Transverse colon (tissue), 4 donors: ENCODE measurements at regions of chr2 and their contacts with region 1.

Region 1: GRCh38 chr2:72150157-72150865 is 2.6 kb upstream of the CYP26B1 start:
- DNase-seq: peak; percentile 86
- H3K4me3 ChIP-seq: peak overlapping the region in 2 of 4 donors; percentile 43 to 62
- H3K27ac ChIP-seq: no peak overlapping the region
- H3K4me1 ChIP-seq: peaks cover 31 to 46% (median 37%) of the 10 kb centered on the region in 4 donors
- H3K27me3 ChIP-seq: peaks cover 54% of the 10 kb centered on the region
- CTCF ChIP-seq: peak; percentile 79 to 94 (median 89)
- EP300 ChIP-seq: no peak
- POLR2A ChIP-seq: no peak

Region 2: DNA sequence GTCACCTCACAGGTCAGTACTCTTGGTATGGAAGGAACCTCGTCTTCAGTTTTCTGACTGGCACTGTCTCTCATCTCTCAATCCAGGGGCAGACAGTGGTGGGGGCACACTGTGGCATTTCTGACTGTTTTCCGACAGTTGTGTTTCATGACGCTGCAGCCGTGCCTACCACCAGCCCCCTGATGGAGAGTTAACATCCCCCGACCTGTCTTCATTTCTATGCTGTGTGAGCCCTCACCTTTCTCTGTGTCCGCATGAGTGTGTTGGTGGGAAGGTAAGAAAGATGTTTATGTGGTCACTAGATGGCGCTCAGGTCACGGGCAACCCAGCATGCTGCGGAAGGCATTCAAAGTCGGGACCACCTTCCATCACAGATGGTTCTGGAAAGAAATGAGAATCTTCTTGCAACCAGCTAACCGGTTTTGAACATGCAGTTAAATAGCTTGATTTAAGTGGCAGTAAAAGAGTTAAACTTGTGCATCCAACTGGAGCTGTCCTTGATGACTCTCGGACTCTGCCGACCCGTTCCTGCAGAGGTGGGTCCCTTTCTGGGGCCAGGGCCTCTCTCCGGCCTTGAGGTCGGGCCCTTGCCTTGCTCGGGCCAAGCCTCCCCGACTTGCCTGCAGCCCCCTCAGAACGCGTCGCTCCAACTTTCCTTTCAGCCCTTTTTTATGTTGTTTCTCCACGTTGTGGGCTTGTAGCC is 604.6 kb before region 1 on chr2:
- in situ Hi-C with region 1: loop called in 3 of 4 experiments (anchors 10 to 25 kb)
- intact Hi-C with region 1: loop called (anchors 2 kb)
- DNase-seq: peak; percentile 36
- H3K4me3 ChIP-seq: peak overlapping the region in 3 of 4 donors; percentile 3 to 29 (median 11)
- H3K27ac ChIP-seq: peak overlapping the region in 1 of 4 donors; percentile 39
- H3K4me1 ChIP-seq: peaks cover 0 to 19% (median 8%) of the 10 kb centered on the region in 4 donors
- H3K27me3 ChIP-seq: peaks cover 10% of the 10 kb centered on the region
- CTCF ChIP-seq: peak; percentile 54 to 61 (median 58)
- EP300 ChIP-seq: no peak
- POLR2A ChIP-seq: no peak

Region 3: GRCh38 chr2:71801969-71802368 is 348.3 kb before region 1 on chr2:
- in situ Hi-C with region 1: loop called in 1 of 4 experiments (anchors 25 kb)
- intact Hi-C with region 1: loop called (anchors 10 kb)
- DNase-seq: peak; percentile 30
- H3K4me3 ChIP-seq: no peak overlapping the region
- H3K27ac ChIP-seq: no peak overlapping the region
- H3K4me1 ChIP-seq: no peaks in the 10 kb centered on the region
- H3K27me3 ChIP-seq: no peaks in the 10 kb centered on the region
- CTCF ChIP-seq: peak in 4 of 5 experiments; percentile 24 to 42 (median 32)
- EP300 ChIP-seq: no peak
- POLR2A ChIP-seq: no peak

Region 4: DNA sequence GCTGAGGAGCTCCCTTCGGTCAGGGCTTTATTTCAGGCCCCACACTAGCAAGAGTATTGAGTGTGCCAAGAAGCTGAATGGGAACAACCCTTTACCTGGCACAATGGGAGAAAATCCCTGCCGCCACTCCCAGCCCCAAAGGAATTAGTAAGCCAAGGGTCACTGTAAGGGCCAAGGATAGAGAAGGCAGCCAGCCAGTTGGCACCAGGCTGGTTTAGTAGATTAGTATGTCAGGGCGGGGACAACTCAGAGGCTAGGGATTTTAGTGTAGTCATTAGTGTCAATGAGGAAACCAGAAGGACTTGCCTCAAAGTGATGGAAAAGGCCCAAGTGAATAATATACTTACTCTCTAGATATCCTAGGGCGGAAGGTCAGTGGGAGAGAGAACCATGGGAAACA is 32.2 kb after region 1 on chr2:
- in situ Hi-C with region 1: no loop called
- intact Hi-C with region 1: no loop called
- DNase-seq: peak; percentile 81
- H3K4me3 ChIP-seq: no peak overlapping the region
- H3K27ac ChIP-seq: peak overlapping the region; percentile 47 to 82 (median 78)
- H3K4me1 ChIP-seq: peaks cover 5 to 37% (median 9%) of the 10 kb centered on the region in 4 donors
- H3K27me3 ChIP-seq: no peaks in the 10 kb centered on the region
- CTCF ChIP-seq: no peak
- EP300 ChIP-seq: no peak
- POLR2A ChIP-seq: no peak

Region 5: DNA sequence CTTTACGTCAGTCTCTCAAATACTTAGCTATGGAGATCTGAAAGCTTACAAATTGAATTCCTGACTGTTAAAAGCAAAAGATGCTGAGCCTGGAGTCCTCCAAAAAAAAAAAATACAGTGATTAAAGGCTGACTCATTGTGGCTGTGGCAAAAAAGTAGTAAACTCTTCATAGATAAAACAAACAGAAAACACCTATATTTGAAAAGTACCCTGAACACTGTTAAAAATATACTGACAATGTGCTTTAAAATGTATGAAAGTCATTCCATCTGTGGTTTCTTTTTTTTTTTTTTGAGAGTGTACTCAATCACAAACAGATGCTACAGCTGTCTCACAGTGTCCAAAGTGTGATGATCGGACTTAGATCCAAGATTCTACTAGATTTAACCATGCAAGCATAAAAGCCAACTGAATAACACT is 264.9 kb after region 1 on chr2:
- in situ Hi-C with region 1: no loop called
- intact Hi-C with region 1: no loop called
- DNase-seq: no peak
- H3K4me3 ChIP-seq: no peak overlapping the region
- H3K27ac ChIP-seq: no peak overlapping the region
- H3K4me1 ChIP-seq: no peaks in the 10 kb centered on the region
- H3K27me3 ChIP-seq: no peaks in the 10 kb centered on the region
- CTCF ChIP-seq: no peak
- EP300 ChIP-seq: no peak
- POLR2A ChIP-seq: no peak

Region 6: GRCh38 chr2:72579591-72580180 is 429.4 kb after region 1 on chr2:
- in situ Hi-C with region 1: loop called in 1 of 4 experiments (anchors 25 kb)
- intact Hi-C with region 1: no loop called
- DNase-seq: no peak
- H3K4me3 ChIP-seq: no peak overlapping the region
- H3K27ac ChIP-seq: no peak overlapping the region
- H3K4me1 ChIP-seq: peaks cover 0 to 11% (median 0%) of the 10 kb centered on the region in 4 donors
- H3K27me3 ChIP-seq: no peaks in the 10 kb centered on the region
- CTCF ChIP-seq: peak; percentile 51 to 68 (median 56)
- EP300 ChIP-seq: no peak
- POLR2A ChIP-seq: no peak